ENCODE measurements at regions of chr14 and their contacts with region 1.

Region 1: DNA sequence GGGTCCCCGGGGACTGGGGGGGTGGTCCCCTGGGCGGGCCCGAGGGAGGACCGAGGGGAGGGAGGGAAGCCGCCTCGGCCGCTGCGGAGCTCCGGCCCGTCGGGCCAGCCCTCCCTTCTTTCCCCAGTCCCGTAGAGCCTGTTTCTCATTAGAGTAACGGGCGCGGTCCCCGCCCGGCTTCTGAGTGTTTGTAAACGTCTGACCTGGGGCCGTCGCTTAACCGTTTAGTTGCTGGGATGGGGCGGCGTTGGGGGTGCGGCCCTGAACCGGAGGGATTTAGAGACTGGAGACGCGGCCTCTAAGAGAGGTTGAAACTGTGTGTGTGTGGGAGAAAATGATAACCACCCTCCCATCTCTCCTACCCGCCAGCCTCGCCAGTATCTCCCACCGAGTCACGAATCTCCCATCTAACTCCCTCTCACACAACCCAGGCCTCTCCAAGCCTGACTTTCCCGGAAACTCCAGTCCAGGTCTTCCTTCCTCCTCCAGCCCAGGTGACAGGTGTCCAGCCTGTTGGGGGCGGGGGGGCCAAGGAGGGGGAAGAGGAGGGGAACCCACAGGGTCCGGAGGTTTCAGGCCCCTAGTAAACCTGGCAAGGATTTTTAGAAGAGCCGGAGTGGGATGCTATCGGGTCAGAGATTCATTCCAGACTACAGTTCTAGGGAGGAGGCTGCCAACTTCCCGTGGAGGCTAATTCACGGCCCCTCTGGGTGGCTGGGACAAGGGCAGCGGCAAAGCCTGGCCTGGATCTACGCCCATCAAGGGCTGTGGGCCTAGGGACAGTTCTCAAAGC is 1.1 kb upstream of the NFATC4 start:
- DNase-seq: peak; percentile 92 to 95
- ATAC-seq: peak; percentile 77 to 93 (median 88)
- H3K4me3 ChIP-seq: peak overlapping the region; percentile 29 to 64 (median 56)
- H3K27ac ChIP-seq: peak overlapping the region; percentile 82 to 96 (median 91)
- H3K4me1 ChIP-seq: peaks cover 0 to 60% (median 25%) of the 10 kb centered on the region in 9 donors
- H3K27me3 ChIP-seq: peaks cover 0 to 56% (median 9%) of the 10 kb centered on the region in 7 donors
- CTCF ChIP-seq: no peak

Region 2: DNA sequence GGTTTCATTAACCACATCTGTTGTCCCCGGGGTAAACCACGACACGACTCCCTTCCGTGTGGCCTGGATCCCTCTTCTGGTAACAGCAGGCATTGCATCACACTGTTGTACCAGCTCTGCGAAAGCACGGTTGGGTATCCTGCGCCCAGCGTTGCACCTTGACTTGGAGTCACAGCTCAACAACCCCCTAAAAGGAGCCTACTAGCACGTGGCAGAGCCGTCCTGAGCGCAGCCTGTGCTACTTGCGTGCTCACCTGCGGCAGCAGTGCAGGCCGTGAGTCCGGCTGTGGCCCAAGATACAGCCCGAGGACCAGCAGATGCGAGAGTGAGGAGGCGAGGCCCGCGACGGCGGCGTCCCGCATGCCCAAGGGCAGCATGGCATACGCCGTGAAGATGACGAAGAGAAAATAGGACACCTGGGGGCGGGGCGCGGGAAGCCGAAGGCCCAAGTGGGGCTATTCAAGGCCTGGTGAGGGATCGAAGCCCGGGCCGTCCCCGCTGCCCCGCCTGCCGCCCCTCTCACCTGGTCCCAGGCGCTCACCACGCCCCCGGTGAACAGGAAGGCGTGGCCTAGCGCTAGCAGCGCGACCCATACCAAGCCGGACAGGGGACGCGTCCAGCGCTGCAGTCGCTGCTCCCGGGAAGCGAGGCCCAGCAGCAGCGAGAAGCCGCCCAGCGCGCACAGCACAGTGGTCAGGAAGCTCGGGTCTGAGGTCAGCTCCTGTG is 34.5 kb before region 1 on chr14:
- intact Hi-C with region 1: loop called in 5 of 10 experiments (anchors 1 to 2 kb)
- DNase-seq: peak; percentile 43 to 68
- ATAC-seq: peak in 7 of 8 donors; percentile 31 to 56 (median 51)
- H3K4me3 ChIP-seq: peak overlapping the region in 9 of 10 donors; percentile 14 to 88 (median 70)
- H3K27ac ChIP-seq: peak overlapping the region in 3 of 10 donors; percentile 15 to 97 (median 90)
- H3K4me1 ChIP-seq: peaks cover 6 to 92% (median 37%) of the 10 kb centered on the region in 9 donors
- H3K27me3 ChIP-seq: peaks cover 0 to 35% (median 24%) of the 10 kb centered on the region in 7 donors
- CTCF ChIP-seq: peak; percentile 43 to 75 (median 68)

Region 3: DNA sequence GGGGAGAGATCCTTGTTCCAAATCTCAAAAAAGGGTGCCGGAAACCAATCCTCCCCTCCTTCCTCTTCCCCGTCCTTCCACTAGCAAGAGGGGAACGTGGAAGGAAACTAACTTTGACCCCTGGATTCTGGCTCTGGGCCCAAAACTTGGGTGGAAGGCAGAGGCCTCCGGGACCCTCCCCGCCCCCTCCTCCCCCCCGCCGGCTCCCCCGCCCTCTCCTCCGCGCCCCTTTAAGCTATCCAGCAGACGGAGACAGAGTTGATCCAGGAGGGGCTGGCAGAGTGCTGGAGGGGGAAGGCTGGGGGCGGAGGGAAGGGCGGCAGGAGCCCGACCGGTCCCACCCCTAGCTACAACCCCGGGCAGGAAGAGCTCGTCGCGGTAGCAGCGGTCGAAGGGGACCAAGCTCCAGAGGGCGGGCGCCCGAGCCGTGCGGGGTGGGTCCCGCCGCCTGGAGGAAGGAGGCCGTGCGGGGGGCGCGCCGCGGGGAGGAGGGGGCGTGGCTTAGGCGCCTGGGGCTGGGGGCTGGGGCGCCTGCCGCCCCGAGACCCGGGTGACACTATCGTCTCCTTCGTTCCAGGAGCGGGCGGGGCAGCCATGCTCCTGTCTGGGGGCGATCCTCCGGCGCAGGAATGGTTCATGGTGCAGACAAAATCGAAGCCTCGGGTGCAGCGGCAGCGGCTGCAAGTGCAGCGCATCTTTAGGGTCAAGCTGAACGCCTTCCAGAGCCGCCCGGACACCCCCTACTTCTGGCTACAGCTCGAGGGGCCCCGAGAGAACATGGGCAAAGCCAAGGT is 31.9 kb after region 1 on chr14 and contains the start of gene NYNRIN:
- intact Hi-C with region 1: loop called in 5 of 10 experiments (anchors 2 kb)
- DNase-seq: peak; percentile 80 to 82
- ATAC-seq: peak; percentile 84 to 93 (median 89)
- H3K4me3 ChIP-seq: peak within 1 kb of the TSS; percentile 49 to 83 (median 74)
- H3K27ac ChIP-seq: peak within 1 kb of the TSS; percentile 67 to 90 (median 86)
- H3K4me1 ChIP-seq: peaks cover 11 to 63% (median 49%) of the 10 kb centered on the region in 9 donors
- H3K27me3 ChIP-seq: no peaks in the 10 kb centered on the region
- CTCF ChIP-seq: peak in 2 of 9 donors; percentile 18 to 24
- total RNA-seq, gene NYNRIN: 3.6 to 9.0 (median 6.4) TPM

Region 4: DNA sequence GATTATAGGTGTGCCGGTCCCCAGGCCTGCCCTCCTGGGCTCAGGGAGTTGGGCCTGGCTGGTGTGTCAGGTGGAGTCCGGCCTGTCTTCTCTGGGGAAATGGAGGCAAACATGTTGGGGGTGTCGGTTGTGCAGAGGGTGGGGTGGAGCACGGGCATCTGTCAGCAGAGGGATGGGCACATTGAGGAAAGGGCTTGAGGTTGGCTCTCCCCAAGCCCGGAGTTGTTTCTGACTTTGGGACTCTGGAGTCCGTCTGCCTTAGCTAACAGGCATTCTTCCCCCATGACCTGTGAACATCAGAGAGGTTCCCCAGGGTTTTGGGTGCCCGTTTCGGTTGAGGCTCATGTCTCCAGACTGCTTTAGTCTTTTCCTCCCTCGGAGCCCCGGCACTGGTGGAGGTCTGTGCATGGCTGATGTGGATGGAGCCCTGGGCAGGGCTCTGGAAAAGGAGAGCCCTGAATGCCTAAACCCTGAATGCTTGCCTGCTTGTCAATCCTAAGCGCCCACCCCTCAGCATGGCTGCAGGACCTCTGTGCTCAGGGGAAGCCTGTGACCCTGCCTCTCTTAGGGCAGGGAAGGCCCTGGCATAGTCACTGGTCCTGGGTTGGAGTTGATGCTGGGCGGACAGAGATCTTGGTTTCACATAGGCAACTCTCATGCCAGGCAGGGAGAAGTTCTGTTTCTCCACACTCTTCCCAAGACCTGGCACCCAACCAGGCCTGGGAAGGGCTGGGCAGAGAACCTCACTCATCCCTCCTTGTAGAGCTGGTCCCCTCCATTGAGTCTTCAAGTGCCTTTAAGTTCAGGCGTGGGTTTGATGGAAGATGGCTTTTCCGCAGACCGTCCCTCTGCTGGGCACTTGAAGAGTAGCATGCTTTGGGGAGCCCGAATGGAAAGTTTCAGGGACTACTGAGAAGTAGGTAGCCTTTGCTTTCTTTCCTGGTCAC is 44.8 kb after region 1 on chr14:
- intact Hi-C with region 1: loop called in 3 of 10 experiments (anchors 5 to 10 kb)
- DNase-seq: no peak
- ATAC-seq: peak in 4 of 8 donors; percentile 23 to 45 (median 34)
- H3K4me3 ChIP-seq: no peak overlapping the region
- H3K27ac ChIP-seq: no peak overlapping the region
- H3K4me1 ChIP-seq: peaks cover 0 to 9% (median 0%) of the 10 kb centered on the region in 9 donors
- H3K27me3 ChIP-seq: no peaks in the 10 kb centered on the region
- CTCF ChIP-seq: peak; percentile 19 to 74 (median 63)